AG04450 (cell line): ENCODE measurements at regions of chr20 and their contacts with region 1.

Region 1: DNA sequence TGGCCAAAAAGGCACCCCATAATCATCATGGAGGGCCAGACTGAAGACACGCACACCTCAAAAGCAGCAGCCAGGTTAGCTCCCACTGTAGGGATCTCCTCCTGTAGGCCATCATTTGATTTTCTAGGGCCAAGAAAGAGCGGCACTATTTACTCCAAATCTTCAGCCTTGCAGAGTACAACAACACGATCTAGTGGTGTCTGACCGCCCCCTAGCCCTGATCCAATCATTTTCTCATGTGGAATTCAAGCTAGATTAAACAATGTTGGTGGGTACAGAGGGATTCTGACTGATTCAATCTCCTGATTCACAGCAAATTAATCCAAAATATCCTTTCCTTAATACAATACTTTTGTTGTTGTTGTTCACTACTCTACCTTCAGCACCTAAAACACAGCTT is 12.5 kb downstream of the GNAS-AS1 start:
- DNase-seq: no peak
- H3K4me3 ChIP-seq: no peak overlapping the region
- H3K27ac ChIP-seq: no peak overlapping the region
- H3K27me3 ChIP-seq: peaks cover 33% of the 10 kb centered on the region
- CTCF ChIP-seq: no peak

Region 2: GRCh38 chr20:58131551-58132142 is 706.5 kb before region 1 on chr20:
- CTCF ChIA-PET with region 1: no interaction called
- POLR2A ChIA-PET with region 1: no interaction called
- DNase-seq: no peak
- H3K4me3 ChIP-seq: no peak overlapping the region
- H3K27ac ChIP-seq: peak overlapping the region; percentile 11
- H3K27me3 ChIP-seq: peaks cover 33% of the 10 kb centered on the region
- CTCF ChIP-seq: no peak

Region 3: DNA sequence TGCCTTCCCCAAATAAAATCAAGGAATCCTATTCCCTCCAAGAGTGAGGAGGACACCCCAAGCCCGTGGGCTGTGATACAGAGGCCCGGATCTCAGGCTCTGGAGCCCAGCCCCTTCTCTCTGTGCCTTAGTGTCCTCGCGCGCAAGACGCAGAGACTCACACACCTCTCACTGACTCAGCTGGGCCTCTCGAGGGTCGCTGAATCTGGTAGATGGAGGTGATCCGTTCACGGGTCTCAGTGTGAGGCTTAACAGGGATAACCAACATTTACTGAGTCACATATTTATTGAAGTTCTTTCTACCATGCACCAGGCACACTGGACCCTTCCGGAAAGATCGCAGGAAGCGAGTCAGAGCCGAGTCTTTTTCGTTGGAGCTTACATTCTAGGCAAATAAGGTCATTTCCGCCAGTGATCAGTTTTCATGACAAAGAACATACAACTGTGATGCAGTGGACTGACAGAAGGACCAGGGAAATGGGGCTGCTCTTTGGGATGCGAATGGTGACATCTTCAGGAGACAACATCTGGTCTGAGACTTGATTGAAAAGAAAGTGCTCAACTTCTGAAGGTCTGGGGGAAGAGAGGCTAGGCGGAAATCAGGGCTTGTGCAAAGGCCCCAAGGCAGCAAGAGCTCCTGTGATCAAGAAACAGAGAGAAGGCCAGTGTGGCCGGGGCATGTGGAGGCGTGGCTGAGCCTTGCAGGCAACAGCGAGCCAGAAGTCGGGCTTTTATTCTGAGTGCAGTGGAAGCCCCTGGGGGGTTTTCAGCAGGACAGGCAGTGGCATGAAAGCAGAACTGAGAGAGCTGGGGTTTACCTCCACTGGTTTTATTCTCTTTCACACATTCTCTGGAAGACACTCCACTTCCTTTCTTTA is 379.8 kb before region 1 on chr20:
- CTCF ChIA-PET with region 1: interaction called, 13 read pairs
- POLR2A ChIA-PET with region 1: no interaction called
- DNase-seq: no peak
- H3K4me3 ChIP-seq: no peak overlapping the region
- H3K27ac ChIP-seq: no peak overlapping the region
- H3K27me3 ChIP-seq: no peaks in the 10 kb centered on the region
- CTCF ChIP-seq: no peak